ENCODE measurements at regions of chr9 and their contacts with region 1.

Region 1: GRCh38 chr9:21559424-21560280 is 77.5 kb upstream of the IFNE start:
- DNase-seq: peak; percentile 52
- H3K4me3 Mint-ChIP-seq: peak overlapping the region; percentile 80
- H3K27ac Mint-ChIP-seq: peak overlapping the region; percentile 95
- H3K4me1 Mint-ChIP-seq: no peaks in the 10 kb centered on the region
- H3K27me3 Mint-ChIP-seq: no peaks in the 10 kb centered on the region
- CTCF ChIP-seq: no peak

Region 2: GRCh38 chr9:21381448-21382339 is 178.0 kb before region 1 on chr9:
- CTCF ChIA-PET with region 1: no interaction called
- POLR2A ChIA-PET with region 1: no interaction called
- intact Hi-C with region 1: no loop called
- DNase-seq: no peak
- H3K4me3 Mint-ChIP-seq: no peak overlapping the region
- H3K27ac Mint-ChIP-seq: no peak overlapping the region
- H3K4me1 Mint-ChIP-seq: no peaks in the 10 kb centered on the region
- H3K27me3 Mint-ChIP-seq: peaks cover 68% of the 10 kb centered on the region
- CTCF ChIP-seq: no peak

Region 3: DNA sequence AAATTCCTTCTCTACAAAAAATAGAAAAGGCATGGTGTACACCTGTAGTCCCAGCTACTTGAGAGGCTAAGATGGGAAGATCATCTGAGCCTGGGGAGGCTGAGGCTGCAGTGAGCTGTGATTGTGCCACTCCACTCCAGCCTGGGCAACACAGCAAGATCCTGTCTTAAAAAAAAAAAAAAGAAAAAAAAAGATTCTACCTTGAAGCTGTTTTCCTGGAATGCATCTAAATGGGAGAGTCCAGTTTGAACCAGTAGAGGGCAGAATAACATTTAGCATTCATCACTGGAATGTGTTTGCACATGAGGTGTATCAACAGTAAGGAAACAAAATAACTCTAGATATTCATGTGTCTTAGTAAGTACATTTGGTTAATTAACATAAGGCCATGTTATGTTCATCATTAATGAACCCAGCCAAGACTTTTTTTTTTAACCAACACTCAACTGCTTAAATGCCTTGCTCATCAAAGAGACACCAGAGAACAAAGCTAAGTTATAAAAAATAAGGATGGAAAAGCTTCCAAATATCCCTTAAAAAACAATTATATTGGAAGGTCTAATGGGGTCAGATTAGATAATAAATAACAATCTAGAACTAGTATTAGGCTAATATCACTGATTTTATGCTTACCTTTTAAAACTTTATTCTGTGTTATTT is 93.7 kb before region 1 on chr9:
- CTCF ChIA-PET with region 1: interaction called, 10 read pairs
- POLR2A ChIA-PET with region 1: no interaction called
- intact Hi-C with region 1: no loop called
- DNase-seq: peak; percentile 47
- H3K4me3 Mint-ChIP-seq: no peak overlapping the region
- H3K27ac Mint-ChIP-seq: no peak overlapping the region
- H3K4me1 Mint-ChIP-seq: no peaks in the 10 kb centered on the region
- H3K27me3 Mint-ChIP-seq: no peaks in the 10 kb centered on the region
- CTCF ChIP-seq: peak; percentile 38

Region 4: DNA sequence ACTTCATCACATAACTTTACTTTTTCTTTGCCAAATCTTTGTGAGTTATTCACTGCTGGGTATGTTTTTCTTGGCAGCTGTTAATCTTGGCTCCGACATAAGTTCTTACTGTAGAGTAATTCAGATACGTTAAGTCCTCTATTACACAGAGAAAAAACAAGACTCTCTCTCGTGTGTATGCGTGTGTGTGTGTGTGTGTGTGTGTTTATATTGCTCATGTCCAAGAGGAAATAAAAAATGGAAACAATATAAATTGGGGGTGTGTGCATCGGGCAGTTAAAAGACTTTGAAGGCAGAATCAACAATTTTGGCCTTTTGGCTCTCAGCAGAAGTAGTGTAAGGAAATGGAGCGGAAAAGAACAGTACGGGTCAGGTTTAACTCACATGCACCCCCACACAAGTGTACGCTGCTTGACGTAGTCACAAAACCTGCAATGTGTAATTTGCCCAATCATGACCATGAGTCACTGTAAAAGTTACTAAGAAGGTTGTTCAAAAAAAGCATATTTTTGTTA is 10.3 kb before region 1 on chr9:
- CTCF ChIA-PET with region 1: interaction called, 5 read pairs
- POLR2A ChIA-PET with region 1: interaction called, 14 read pairs
- intact Hi-C with region 1: no loop called
- DNase-seq: peak; percentile 85
- H3K4me3 Mint-ChIP-seq: peak overlapping the region; percentile 67
- H3K27ac Mint-ChIP-seq: peak overlapping the region; percentile 89
- H3K4me1 Mint-ChIP-seq: peaks cover 26% of the 10 kb centered on the region
- H3K27me3 Mint-ChIP-seq: no peaks in the 10 kb centered on the region
- CTCF ChIP-seq: no peak

Region 5: GRCh38 chr9:21681641-21682040 is 122.0 kb after region 1 on chr9:
- CTCF ChIA-PET with region 1: no interaction called
- POLR2A ChIA-PET with region 1: interaction called, 23 read pairs
- intact Hi-C with region 1: loop called (anchors 5 kb)
- DNase-seq: peak; percentile 31
- H3K4me3 Mint-ChIP-seq: no peak overlapping the region
- H3K27ac Mint-ChIP-seq: peak overlapping the region; percentile 85
- H3K4me1 Mint-ChIP-seq: peaks cover 13% of the 10 kb centered on the region
- H3K27me3 Mint-ChIP-seq: no peaks in the 10 kb centered on the region
- CTCF ChIP-seq: no peak

Region 6: DNA sequence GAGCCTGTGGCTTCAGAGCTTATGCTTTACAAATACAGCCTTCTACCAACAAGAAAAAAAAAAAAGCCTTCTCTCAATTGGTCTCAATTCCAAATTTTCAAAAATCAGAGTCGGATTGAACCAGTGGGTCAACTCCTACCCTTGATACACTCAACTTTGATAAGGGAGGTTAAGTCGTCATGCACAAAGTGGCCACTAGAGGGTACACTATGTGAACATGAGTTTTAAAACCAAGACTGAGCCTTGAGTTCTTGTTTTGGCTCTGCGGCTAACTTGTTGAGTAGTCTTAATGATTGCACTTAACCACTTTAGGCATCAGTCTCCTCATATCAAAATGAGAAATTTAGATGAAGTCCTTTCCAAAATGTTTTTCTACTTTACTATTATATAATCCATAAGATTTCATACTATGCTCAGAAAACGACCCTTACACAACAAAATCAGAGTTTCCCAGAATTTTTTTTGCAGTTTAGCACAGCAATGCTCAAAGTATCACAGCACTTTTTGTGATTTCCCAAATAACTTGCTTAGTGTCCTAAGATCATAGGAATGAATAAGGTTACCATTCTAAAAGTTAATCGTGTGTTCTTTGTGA is 149.9 kb after region 1 on chr9:
- CTCF ChIA-PET with region 1: interaction called, 9 read pairs
- POLR2A ChIA-PET with region 1: interaction called, 9 read pairs
- intact Hi-C with region 1: loop called (anchors 5 kb)
- DNase-seq: peak; percentile 59
- H3K4me3 Mint-ChIP-seq: no peak overlapping the region
- H3K27ac Mint-ChIP-seq: peak overlapping the region; percentile 35
- H3K4me1 Mint-ChIP-seq: peaks cover 6% of the 10 kb centered on the region
- H3K27me3 Mint-ChIP-seq: no peaks in the 10 kb centered on the region
- CTCF ChIP-seq: peak; percentile 29

Region 7: GRCh38 chr9:22211593-22212360 is 652.1 kb after region 1 on chr9:
- CTCF ChIA-PET with region 1: interaction called, 4 read pairs
- POLR2A ChIA-PET with region 1: interaction called, 3 read pairs
- intact Hi-C with region 1: loop called (anchors 5 kb)
- DNase-seq: peak; percentile 79
- H3K4me3 Mint-ChIP-seq: no peak overlapping the region
- H3K27ac Mint-ChIP-seq: peak overlapping the region; percentile 79
- H3K4me1 Mint-ChIP-seq: peaks cover 23% of the 10 kb centered on the region
- H3K27me3 Mint-ChIP-seq: no peaks in the 10 kb centered on the region
- CTCF ChIP-seq: no peak